ENCODE measurements at regions of chr11 and their contacts with region 1.

Region 1: DNA sequence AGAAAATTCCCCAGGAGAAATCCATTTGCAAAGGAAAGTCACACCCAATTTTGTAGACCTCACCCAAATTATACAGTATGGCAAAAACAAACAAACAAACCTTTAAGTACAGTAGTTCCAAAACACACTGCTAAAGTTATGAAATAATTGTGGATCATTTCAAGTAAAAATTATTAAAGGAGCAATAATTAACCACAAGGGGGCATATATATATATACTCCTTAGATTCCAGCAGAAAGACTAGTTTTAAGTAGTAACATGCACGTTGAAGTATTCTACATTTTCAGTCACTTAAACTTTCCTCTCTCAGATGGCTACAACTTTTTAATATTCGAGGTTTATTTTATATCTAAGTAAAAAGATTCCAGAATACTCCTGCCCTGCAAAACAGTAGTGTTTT is 26.8 kb downstream of the RNF141 start:
- DNase-seq: no peak

Region 2: DNA sequence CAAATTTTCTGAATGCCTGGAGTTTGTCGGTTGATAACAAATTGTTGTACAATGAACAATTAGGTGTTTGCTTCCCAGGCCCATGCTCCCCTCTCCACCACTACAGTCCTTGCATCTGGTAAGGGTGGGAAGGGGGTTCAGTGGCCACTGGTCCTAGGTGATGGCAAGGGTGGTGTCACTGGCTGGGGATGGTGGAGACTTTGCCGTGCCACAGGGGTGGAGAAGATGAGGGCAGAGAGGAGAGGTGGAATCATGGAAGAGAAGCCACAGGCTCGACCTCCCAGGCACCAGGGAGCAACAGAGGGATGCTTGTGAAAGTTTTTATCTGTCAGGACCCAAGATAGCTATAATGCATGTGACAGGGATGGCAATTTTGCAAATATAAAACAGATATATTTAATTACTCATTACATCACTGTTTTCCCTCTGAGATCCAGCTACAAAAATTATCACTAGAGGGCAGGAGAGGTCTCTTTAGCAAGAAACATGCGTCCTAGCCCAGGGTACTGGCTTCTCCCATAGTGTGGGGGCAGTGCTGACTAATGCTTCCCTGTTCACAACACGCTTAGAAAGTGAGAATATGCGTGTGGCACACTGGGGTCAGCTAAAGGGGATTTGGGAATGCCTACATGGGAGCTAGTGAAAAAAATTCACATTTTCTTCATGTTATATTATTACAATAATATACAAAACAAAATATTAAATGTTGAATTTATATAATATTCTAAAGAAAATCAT is 108.2 kb before region 1 on chr11:
- intact Hi-C with region 1: loop called (anchors 5 kb)
- DNase-seq: no peak

Region 3: DNA sequence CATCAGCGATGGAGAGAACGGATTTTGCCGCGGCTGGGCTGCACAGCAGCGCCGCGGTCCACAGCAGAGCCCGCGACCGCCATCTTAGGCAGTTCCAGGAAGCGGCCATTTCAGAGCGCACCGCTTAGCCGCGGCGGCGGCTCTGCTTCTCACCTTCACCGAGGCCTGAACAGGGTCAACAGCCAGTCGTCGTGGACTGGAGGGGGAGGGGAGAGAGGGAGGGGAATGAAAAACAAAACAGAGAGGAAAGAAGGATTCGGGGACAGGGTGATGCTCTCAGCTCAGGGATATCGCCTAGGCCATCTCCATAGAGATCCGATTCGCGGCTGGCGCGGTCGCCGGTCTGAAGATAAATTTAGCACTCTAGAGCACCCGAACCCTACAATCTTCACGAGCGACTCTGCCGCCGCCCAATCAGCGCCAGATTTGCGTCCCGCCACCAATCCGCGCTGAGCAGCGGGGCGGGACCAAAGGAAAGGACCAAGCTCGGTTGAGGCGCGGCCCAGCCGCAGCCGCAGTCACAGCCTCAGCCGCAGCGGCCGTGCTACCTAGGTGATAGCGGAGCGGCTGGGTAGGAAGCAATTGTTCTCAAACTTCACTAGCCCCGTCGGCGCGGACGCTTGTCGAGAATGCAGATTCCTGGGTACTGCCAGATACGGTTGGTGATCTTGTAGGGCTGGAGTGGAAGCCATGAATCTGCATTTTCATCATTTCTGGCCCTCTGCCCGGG is 343.7 kb after region 1 on chr11 and contains the start of gene ZBED5:
- intact Hi-C with region 1: no loop called
- DNase-seq: peak; percentile 99
- total RNA-seq, gene ZBED5: 38.8 TPM